OCI-LY7 (cell line): ENCODE measurements at regions of chr7 and their contacts with region 1.

Region 1: GRCh38 chr7:23373151-23374004 is 74.2 kb downstream of the MALSU1 start:
- DNase-seq: peak; percentile 92
- H3K4me3 ChIP-seq: peak overlapping the region; percentile 51
- H3K27ac ChIP-seq: peak overlapping the region; percentile 94
- H3K4me1 ChIP-seq: peaks cover 75% of the 10 kb centered on the region
- CTCF ChIP-seq: no peak

Region 2: DNA sequence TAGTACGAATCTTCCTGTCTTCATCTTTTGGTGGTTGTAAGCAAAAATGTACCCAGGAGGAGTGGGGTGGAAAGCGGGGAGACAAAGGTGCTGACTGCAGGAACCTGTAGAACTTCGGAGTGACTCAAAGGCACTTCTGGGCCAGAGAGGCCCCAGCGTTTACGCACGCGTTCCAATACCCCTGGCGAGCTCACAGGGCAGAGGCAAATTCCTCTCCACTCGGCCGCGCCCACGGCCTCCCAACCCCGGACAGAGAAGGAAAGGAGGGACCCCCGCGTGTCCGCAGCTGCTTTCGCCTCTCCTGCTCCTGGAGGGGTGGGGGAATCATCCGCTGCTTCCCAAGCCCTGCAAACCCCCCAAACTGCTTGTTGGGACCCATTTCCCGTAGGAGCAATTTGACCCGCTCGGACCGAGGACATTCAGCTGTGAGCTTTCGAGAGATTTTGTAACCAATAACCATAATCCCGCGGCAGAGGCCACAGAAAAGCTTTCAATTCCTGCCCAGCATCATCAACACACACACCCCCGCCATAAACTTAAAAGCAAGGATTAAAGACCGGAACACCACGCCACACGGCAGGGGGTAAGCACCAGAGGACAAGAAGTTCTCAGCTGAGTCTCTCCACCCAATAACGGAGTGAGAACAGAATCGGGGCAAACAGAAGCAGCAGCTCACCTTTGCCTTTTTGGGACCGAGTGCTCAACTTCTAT is 94.6 kb after region 1 on chr7:
- CTCF ChIA-PET with region 1: no interaction called
- POLR2A ChIA-PET with region 1: interaction called, 9 read pairs
- intact Hi-C with region 1: loop called (anchors 1 kb)
- DNase-seq: peak; percentile 70
- H3K4me3 ChIP-seq: peak overlapping the region; percentile 85
- H3K27ac ChIP-seq: peak overlapping the region; percentile 90
- H3K4me1 ChIP-seq: peaks cover 44% of the 10 kb centered on the region
- CTCF ChIP-seq: no peak

Region 3: GRCh38 chr7:23531794-23532489 is 158.6 kb after region 1 on chr7 and contains the start of gene TRA2A:
- CTCF ChIA-PET with region 1: no interaction called
- POLR2A ChIA-PET with region 1: interaction called, 3 read pairs
- intact Hi-C with region 1: loop called (anchors 5 kb)
- DNase-seq: peak; percentile 96
- H3K4me3 ChIP-seq: peak within 1 kb of the TSS; percentile 98
- H3K27ac ChIP-seq: peak within 1 kb of the TSS; percentile 94
- H3K4me1 ChIP-seq: peaks cover 45% of the 10 kb centered on the region
- CTCF ChIP-seq: 0 out of 2 replicates have a peak, but pooled peaks have one; percentile 14
- total RNA-seq, gene TRA2A: 41.4 and 44.9 TPM in 2 replicates